Calu3 (cell line): ENCODE measurements at regions of chr1 and their contacts with region 1.

Region 1: GRCh38 chr1:159891275-159892157 is 8.4 kb downstream of the CFAP45 start:
- DNase-seq: peak; percentile 91
- H3K4me3 Mint-ChIP-seq: no peak overlapping the region
- H3K27ac Mint-ChIP-seq: no peak overlapping the region
- H3K4me1 Mint-ChIP-seq: peaks cover 11% of the 10 kb centered on the region
- H3K27me3 Mint-ChIP-seq: no peaks in the 10 kb centered on the region
- CTCF ChIP-seq: peak; percentile 99

Region 2: DNA sequence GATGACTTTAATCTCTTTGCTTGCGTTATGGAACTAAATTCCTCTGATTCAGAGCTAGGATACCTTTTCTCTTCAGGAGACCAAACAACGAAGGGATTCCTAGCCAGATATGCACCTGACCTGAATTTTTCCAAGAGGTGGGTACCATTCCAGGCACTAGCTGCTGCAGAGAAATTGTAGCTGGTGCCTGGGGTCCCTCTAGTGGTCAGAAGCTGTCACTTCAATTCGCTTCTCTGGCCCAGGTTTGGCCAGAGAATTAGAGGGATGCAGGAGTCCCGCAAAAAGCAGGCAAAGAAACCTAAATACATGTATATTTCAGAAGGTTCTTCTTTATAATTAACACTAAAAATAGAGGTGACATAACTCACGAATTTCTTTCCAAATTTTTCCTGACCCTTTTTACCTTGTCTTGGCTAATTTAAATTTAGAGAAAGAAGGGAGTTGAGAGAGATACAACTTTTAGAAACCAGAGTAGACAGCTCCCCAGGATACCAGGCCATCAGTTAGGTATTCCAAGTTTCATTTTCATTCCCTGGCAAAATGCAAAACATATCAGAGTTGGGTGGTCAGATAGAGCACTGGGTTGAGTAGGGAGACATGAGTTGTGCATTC is 677.3 kb before region 1 on chr1:
- CTCF ChIA-PET with region 1: interaction called, 4 read pairs
- intact Hi-C with region 1: loop called (anchors 5 kb)
- DNase-seq: peak; percentile 60
- H3K4me3 Mint-ChIP-seq: no peak overlapping the region
- H3K27ac Mint-ChIP-seq: no peak overlapping the region
- H3K4me1 Mint-ChIP-seq: peaks cover 8% of the 10 kb centered on the region
- H3K27me3 Mint-ChIP-seq: peaks cover 85% of the 10 kb centered on the region
- CTCF ChIP-seq: peak; percentile 90

Region 3: DNA sequence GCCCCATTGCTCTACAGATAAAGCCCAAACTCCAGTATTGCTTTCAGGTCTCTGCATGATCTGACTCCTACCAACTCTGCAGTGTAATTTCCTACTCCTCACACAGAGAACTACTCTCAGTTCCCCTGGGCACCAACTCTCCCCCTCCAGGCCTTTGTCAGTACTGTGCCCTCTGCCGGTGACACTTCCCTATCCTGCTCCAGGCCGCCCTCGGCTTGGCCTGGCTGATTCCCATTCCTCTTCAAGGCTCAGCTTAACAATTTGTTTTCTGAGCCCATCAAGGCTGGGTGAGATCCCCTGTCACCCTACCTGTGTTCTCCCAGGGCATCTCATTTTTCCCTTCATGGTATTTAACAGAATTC is 62.3 kb before region 1 on chr1:
- CTCF ChIA-PET with region 1: interaction called, 3 read pairs
- intact Hi-C with region 1: loop called (anchors 2 kb)
- DNase-seq: peak; percentile 63
- H3K4me3 Mint-ChIP-seq: no peak overlapping the region
- H3K27ac Mint-ChIP-seq: no peak overlapping the region
- H3K4me1 Mint-ChIP-seq: no peaks in the 10 kb centered on the region
- H3K27me3 Mint-ChIP-seq: peaks cover 74% of the 10 kb centered on the region
- CTCF ChIP-seq: peak; percentile 70

Region 4: GRCh38 chr1:159854693-159855192 is 36.8 kb before region 1 on chr1:
- CTCF ChIA-PET with region 1: interaction called, 3 read pairs
- intact Hi-C with region 1: loop called (anchors 2 kb)
- DNase-seq: peak; percentile 84
- H3K4me3 Mint-ChIP-seq: peak overlapping the region; percentile 69
- H3K27ac Mint-ChIP-seq: peak overlapping the region; percentile 9
- H3K4me1 Mint-ChIP-seq: peaks cover 11% of the 10 kb centered on the region
- H3K27me3 Mint-ChIP-seq: peaks cover 4% of the 10 kb centered on the region
- CTCF ChIP-seq: no peak

Region 5: DNA sequence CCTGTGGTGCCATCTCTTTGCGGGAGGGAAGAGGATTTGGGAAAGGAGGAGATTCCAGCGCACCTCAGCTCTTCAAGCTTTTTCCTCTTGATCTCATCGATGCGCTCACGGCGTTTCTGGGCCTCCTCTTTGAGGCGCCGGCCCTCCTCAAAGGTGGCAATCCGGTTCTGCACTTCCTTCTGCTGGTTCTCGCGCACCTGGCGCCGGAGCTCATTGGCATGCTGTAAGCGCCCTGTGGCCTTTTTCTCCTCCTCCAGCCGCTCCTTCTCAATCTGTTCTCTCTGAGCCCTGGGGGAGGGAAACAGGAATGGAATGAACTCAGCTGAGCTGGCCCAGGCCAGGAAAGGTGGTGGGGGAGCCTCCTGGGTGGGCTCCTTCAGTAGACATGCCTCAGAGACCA is 18.6 kb before region 1 on chr1:
- CTCF ChIA-PET with region 1: no interaction called
- intact Hi-C with region 1: no loop called
- DNase-seq: no peak
- H3K4me3 Mint-ChIP-seq: no peak overlapping the region
- H3K27ac Mint-ChIP-seq: no peak overlapping the region
- H3K4me1 Mint-ChIP-seq: peaks cover under 1% of the 10 kb centered on the region
- H3K27me3 Mint-ChIP-seq: peaks cover 13% of the 10 kb centered on the region
- CTCF ChIP-seq: no peak

Region 6: GRCh38 chr1:159945483-159946241 is 54.1 kb after region 1 on chr1 and contains the start of gene IGSF9:
- CTCF ChIA-PET with region 1: interaction called, 19 read pairs
- intact Hi-C with region 1: loop called (anchors 2 kb)
- DNase-seq: peak; percentile 94
- H3K4me3 Mint-ChIP-seq: peak within 1 kb of the TSS; percentile 94
- H3K27ac Mint-ChIP-seq: peak within 1 kb of the TSS; percentile 86
- H3K4me1 Mint-ChIP-seq: peaks cover 35% of the 10 kb centered on the region
- H3K27me3 Mint-ChIP-seq: peaks cover 9% of the 10 kb centered on the region
- CTCF ChIP-seq: peak; percentile 48
- total RNA-seq, gene IGSF9: 7.5 and 7.6 TPM in 2 replicates

Region 7: GRCh38 chr1:160376525-160377131 is 485.1 kb after region 1 on chr1:
- CTCF ChIA-PET with region 1: no interaction called
- intact Hi-C with region 1: no loop called
- DNase-seq: peak; percentile 55
- H3K4me3 Mint-ChIP-seq: no peak overlapping the region
- H3K27ac Mint-ChIP-seq: no peak overlapping the region
- H3K4me1 Mint-ChIP-seq: peaks cover 17% of the 10 kb centered on the region
- H3K27me3 Mint-ChIP-seq: peaks cover 24% of the 10 kb centered on the region
- CTCF ChIP-seq: peak; percentile 79

Region 8: DNA sequence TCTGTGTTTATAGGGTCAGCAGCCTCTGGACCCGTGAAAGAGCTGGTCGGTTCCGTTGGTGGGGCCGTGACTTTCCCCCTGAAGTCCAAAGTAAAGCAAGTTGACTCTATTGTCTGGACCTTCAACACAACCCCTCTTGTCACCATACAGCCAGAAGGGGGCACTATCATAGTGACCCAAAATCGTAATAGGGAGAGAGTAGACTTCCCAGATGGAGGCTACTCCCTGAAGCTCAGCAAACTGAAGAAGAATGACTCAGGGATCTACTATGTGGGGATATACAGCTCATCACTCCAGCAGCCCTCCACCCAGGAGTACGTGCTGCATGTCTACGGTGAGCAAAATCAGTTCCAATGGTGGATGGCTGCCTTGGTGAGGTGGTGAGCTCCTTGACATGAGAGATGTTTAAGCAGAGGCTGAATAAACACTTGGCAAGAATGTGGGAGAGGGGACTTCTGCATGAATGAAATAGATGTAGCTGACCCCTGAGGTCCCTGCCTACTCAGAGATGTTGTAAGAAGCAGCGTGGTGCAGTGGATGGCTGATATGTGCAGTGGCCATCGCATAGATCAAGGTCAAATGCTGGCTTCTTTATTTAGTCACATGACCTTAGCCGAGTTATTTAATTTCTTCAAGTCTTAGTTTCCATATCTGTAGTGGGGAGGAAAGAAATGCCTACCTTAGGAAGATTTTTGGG is 856.8 kb after region 1 on chr1:
- CTCF ChIA-PET with region 1: no interaction called
- intact Hi-C with region 1: no loop called
- DNase-seq: no peak
- H3K4me3 Mint-ChIP-seq: no peak overlapping the region
- H3K27ac Mint-ChIP-seq: no peak overlapping the region
- H3K4me1 Mint-ChIP-seq: peaks cover 29% of the 10 kb centered on the region
- H3K27me3 Mint-ChIP-seq: peaks cover 33% of the 10 kb centered on the region
- CTCF ChIP-seq: no peak